ENCODE measurements at regions of chr12 and their contacts with region 1.

Region 1: DNA sequence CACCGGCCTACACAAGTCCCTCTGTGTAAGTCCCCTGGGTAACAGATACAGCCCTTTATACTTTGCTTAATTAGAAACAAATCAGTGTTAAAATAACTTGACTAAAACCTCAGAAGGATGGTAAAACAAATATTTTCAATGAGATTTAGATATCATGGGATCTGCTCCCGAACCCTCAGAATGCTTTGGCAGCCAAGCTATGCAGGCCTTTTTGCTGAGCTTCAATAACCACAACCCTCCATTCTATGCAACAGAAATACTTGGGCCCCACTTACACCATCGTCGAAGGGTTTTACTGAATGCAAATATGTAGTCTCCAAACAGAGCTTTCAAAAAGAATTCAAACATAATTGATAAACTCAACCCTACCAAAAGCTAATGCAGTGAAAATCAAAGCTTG is 29.3 kb upstream of the PITPNM2 start:
- DNase-seq: no peak
- ATAC-seq: no peak
- H3K4me3 ChIP-seq: no peak overlapping the region
- H3K27ac ChIP-seq: no peak overlapping the region
- H3K4me1 ChIP-seq: no peaks in the 10 kb centered on the region
- H3K27me3 ChIP-seq: no peaks in the 10 kb centered on the region
- CTCF ChIP-seq: no peak
- POLR2A ChIP-seq: no peak

Region 2: DNA sequence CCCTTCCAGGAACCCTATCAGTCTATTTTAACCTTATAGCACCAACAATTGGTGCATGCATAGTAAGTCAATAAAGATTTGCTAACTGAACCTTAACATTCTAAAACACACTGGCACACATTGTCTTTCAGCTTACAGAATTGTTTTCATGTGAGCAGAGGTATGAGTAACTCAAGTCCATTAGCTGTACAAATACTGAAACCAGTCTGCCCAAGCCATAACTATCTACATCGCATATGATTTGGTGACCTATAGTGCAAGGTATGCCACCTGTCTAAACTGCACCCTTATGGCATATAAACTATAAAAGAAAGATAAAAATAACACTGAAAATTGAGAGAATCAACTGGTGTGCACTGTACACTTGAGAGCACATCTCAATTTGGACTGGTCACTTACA is 149.6 kb after region 1 on chr12:
- intact Hi-C with region 1: loop called in 1 of 10 experiments (anchors 10 kb)
- DNase-seq: no peak
- ATAC-seq: no peak
- H3K4me3 ChIP-seq: no peak overlapping the region
- H3K27ac ChIP-seq: no peak overlapping the region
- H3K4me1 ChIP-seq: no peaks in the 10 kb centered on the region
- H3K27me3 ChIP-seq: no peaks in the 10 kb centered on the region
- CTCF ChIP-seq: no peak
- POLR2A ChIP-seq: no peak

Measured in heart left ventricle (tissue), 16 donors.